ENCODE measurements at regions of chr17 and their contacts with region 1.

Region 1: DNA sequence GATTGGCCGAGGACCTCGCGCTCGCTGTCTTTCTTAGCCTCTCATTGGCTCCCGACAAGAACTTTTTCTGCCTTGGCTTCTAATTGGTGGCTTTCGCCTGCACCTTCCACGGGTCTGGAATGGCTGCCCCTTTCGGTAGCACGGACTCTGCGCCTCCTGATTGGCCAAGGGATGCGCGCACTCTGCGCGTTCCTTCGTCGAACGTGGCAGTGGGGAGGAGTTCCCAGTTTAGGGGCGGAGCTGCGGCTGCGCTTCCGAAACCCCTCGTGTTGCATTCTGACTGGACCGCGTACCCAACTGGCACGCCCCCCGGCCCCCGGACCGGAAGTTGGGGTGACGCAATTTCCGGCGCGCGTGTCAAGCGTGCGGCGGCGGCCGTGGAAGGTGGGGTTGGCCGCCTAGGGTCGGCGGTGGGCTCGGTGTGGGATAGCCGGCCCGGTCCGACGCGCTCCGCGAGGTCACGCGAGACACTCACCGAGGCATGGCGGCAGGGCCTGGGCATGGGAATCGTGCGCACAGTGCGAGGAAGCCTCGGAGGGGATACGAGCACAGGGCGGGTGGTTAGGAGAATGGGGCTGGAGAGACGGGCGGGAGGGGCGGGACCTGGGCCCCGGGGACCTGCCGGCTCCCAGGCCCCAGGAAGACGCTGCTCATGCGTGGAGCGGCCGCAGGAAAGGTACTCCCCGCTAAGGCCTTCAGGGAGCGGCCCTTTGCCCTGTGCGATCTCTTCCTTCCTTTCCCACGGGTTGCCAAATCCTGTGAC is 602 bp upstream of the P4HB start:
- DNase-seq: peak; percentile 98 to 100 (median 100)
- ATAC-seq: peak; percentile 91
- H3K4me3 ChIP-seq: peak overlapping the region; percentile 83
- H3K4me3 Mint-ChIP-seq: peak overlapping the region; percentile 81 to 99 (median 90)
- H3K27ac ChIP-seq: peak overlapping the region; percentile 95
- H3K27ac Mint-ChIP-seq: peak overlapping the region; percentile 89 to 100 (median 98)
- H3K4me1 ChIP-seq: peaks cover 20 to 27% of the 10 kb centered on the region in 2 donors
- H3K4me1 Mint-ChIP-seq: peaks cover 19 to 53% (median 43%) of the 10 kb centered on the region in 7 donors
- H3K27me3 ChIP-seq: no peaks in the 10 kb centered on the region
- H3K27me3 Mint-ChIP-seq: peaks cover 0 to 5% (median 0%) of the 10 kb centered on the region in 5 donors

Region 2: GRCh38 chr17:81512560-81513371 is 348.2 kb before region 1 on chr17 and contains the start of gene ACTG1:
- CTCF ChIA-PET with region 1: no interaction called
- POLR2A ChIA-PET with region 1: interaction called, 3 read pairs
- intact Hi-C with region 1: loop called (anchors 2 to 5 kb)
- DNase-seq: peak; percentile 87 to 93 (median 92)
- ATAC-seq: peak; percentile 87
- H3K4me3 ChIP-seq: peak within 1 kb of the TSS; percentile 77
- H3K4me3 Mint-ChIP-seq: peak within 1 kb of the TSS; percentile 91 to 100 (median 98)
- H3K27ac ChIP-seq: peak within 1 kb of the TSS; percentile 79
- H3K27ac Mint-ChIP-seq: peak within 1 kb of the TSS; percentile 92 to 99 (median 95)
- H3K4me1 ChIP-seq: peaks cover 12 to 31% of the 10 kb centered on the region in 2 donors
- H3K4me1 Mint-ChIP-seq: peaks cover 23 to 53% (median 47%) of the 10 kb centered on the region in 7 donors
- H3K27me3 ChIP-seq: no peaks in the 10 kb centered on the region
- H3K27me3 Mint-ChIP-seq: peaks cover 0 to 7% (median 0%) of the 10 kb centered on the region in 5 donors
- total RNA-seq, gene ACTG1: 971 to 4,639 (median 1,185) TPM

Region 3: DNA sequence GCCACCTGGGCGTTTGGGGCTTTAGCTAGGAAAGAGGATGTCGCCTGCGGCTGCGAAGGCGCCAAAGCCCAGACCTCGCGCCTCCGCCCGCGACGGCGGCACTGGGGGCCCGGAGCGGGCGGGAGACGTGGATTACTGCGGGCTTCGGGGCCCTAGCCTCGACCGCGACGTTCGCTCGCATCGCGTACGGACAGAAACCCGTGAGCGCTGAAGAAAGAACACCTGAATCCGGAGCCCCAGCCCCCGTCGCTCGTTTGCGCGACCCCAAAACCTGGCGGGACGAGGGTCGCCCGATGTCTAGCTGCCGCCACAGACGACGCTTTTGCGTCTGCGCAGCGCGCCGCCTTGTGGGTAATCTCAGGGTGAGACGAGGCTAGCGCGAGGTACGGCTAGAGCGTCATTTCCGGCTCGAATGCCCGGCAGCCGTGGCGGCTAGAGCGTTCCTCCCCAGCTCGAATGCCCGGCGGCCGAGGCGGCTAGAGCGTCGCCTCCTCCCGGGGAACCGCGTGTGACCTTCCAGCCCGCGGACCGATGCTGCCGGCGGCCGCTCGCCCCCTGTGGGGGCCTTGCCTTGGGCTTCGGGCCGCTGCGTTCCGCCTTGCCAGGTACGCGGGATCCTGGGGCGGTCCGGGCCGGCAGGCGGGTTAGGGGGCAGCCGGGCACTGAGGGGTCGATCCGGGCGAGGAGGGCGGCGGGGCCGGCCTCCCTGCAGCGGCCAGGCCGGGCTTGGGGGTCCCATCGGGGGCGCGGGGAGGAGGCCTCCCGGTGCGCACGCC is 157.8 kb before region 1 on chr17 and contains the start of gene MRPL12:
- CTCF ChIA-PET with region 1: no interaction called
- POLR2A ChIA-PET with region 1: interaction called, 3 read pairs
- intact Hi-C with region 1: loop called (anchors 1 to 2 kb)
- DNase-seq: peak; percentile 75 to 87 (median 84)
- ATAC-seq: peak; percentile 96
- H3K4me3 ChIP-seq: peak within 1 kb of the TSS; percentile 91
- H3K4me3 Mint-ChIP-seq: peak within 1 kb of the TSS; percentile 83 to 94 (median 90)
- H3K27ac ChIP-seq: peak within 1 kb of the TSS; percentile 95
- H3K27ac Mint-ChIP-seq: peak within 1 kb of the TSS; percentile 84 to 96 (median 92)
- H3K4me1 ChIP-seq: peaks cover 23 to 24% of the 10 kb centered on the region in 2 donors
- H3K4me1 Mint-ChIP-seq: peaks cover 21 to 38% (median 26%) of the 10 kb centered on the region in 7 donors
- H3K27me3 ChIP-seq: no peaks in the 10 kb centered on the region
- H3K27me3 Mint-ChIP-seq: no peaks in the 10 kb centered on the region
- total RNA-seq, gene MRPL12: 21.3 to 83.8 (median 26.6) TPM

Region 4: GRCh38 chr17:81871387-81872230 is 10.7 kb after region 1 on chr17:
- CTCF ChIA-PET with region 1: no interaction called
- POLR2A ChIA-PET with region 1: interaction called, 62 read pairs
- intact Hi-C with region 1: loop called (anchors 1 kb)
- DNase-seq: peak; percentile 93 to 99 (median 97)
- ATAC-seq: peak; percentile 45
- H3K4me3 ChIP-seq: peak overlapping the region; percentile 93
- H3K4me3 Mint-ChIP-seq: peak overlapping the region; percentile 82 to 91 (median 86)
- H3K27ac ChIP-seq: peak overlapping the region; percentile 98
- H3K27ac Mint-ChIP-seq: peak overlapping the region; percentile 88 to 97 (median 95)
- H3K4me1 ChIP-seq: peaks cover 25 to 28% of the 10 kb centered on the region in 2 donors
- H3K4me1 Mint-ChIP-seq: peaks cover 11 to 43% (median 41%) of the 10 kb centered on the region in 7 donors
- H3K27me3 ChIP-seq: no peaks in the 10 kb centered on the region
- H3K27me3 Mint-ChIP-seq: no peaks in the 10 kb centered on the region

Region 5: DNA sequence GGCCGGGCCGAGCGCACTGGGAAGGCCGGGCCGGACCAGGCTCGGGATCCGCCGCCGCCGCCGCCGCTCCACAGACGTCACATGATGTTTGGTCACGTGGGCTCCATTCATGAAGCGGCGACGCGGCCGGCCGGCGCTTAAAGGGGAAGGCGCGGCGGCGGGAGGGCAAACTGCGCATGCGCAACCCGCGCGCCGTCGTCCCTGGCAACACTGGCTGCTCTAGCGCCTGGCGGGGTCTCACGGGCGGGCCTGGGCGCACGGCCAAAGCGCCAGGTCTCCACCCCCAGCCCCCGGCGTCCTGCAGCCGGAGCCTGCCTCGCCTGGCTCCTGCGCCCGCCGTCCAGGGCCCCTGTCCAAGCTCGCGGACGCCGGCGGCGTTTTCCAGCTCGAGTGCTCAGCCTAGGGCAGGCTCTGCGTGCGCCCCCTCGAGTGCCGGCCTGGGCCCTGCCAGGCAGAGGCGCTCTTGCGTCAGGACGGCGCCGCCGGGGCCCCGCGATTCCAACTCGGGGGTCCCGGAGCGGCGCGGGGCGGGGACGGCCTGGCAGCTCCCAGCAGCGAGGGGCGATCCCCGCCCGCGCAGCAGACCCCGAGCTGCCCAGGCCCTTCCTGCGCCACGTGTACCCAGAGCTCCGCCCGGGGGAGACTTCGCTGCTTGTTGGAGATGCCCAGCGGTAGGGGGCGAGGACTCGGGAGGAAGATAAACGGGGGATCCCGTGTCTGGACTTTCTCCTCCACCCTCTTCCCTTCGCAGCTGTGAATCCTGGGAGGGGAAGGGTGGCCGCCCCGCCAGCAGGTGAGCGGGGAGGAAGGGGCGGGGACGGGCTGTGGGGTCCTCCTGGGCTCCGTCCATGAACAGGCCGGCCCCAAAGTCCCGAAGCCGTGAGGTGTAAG is 67.0 kb after region 1 on chr17 and contains the start of gene MAFG:
- CTCF ChIA-PET with region 1: no interaction called
- POLR2A ChIA-PET with region 1: interaction called, 5 read pairs
- intact Hi-C with region 1: loop called in 1 of 2 experiments (anchors 1 kb)
- DNase-seq: peak; percentile 81 to 93 (median 88)
- ATAC-seq: peak; percentile 72
- H3K4me3 ChIP-seq: peak within 1 kb of the TSS; percentile 58
- H3K4me3 Mint-ChIP-seq: peak within 1 kb of the TSS; percentile 77 to 91 (median 84)
- H3K27ac ChIP-seq: peak within 1 kb of the TSS; percentile 71
- H3K27ac Mint-ChIP-seq: peak within 1 kb of the TSS; percentile 69 to 95 (median 88)
- H3K4me1 ChIP-seq: peaks cover 10 to 31% of the 10 kb centered on the region in 2 donors
- H3K4me1 Mint-ChIP-seq: peaks cover 9 to 29% (median 20%) of the 10 kb centered on the region in 7 donors
- H3K27me3 ChIP-seq: peaks cover 0 to 13% of the 10 kb centered on the region in 2 donors
- H3K27me3 Mint-ChIP-seq: peaks cover 0 to 18% (median 0%) of the 10 kb centered on the region in 5 donors
- total RNA-seq, gene MAFG: 12.9 to 28.1 (median 18.1) TPM

Region 6: GRCh38 chr17:82457997-82458864 is 597.3 kb after region 1 on chr17 and contains the start of gene NARF:
- CTCF ChIA-PET with region 1: no interaction called
- POLR2A ChIA-PET with region 1: no interaction called
- intact Hi-C with region 1: loop called in 1 of 2 experiments (anchors 1 kb)
- DNase-seq: peak; percentile 89 to 97 (median 97)
- ATAC-seq: peak; percentile 98
- H3K4me3 ChIP-seq: peak within 1 kb of the TSS; percentile 75
- H3K4me3 Mint-ChIP-seq: peak within 1 kb of the TSS; percentile 85 to 94 (median 88)
- H3K27ac ChIP-seq: peak within 1 kb of the TSS; percentile 97
- H3K27ac Mint-ChIP-seq: peak within 1 kb of the TSS; percentile 96 to 99 (median 98)
- H3K4me1 ChIP-seq: peaks cover 20% of the 10 kb centered on the region in 2 donors
- H3K4me1 Mint-ChIP-seq: peaks cover 22 to 47% (median 30%) of the 10 kb centered on the region in 7 donors
- H3K27me3 ChIP-seq: no peaks in the 10 kb centered on the region
- H3K27me3 Mint-ChIP-seq: no peaks in the 10 kb centered on the region
- total RNA-seq, gene NARF: 59.8 to 188 (median 67.1) TPM